ENCODE measurements at regions of chr16 and their contacts with region 1.

Region 1: DNA sequence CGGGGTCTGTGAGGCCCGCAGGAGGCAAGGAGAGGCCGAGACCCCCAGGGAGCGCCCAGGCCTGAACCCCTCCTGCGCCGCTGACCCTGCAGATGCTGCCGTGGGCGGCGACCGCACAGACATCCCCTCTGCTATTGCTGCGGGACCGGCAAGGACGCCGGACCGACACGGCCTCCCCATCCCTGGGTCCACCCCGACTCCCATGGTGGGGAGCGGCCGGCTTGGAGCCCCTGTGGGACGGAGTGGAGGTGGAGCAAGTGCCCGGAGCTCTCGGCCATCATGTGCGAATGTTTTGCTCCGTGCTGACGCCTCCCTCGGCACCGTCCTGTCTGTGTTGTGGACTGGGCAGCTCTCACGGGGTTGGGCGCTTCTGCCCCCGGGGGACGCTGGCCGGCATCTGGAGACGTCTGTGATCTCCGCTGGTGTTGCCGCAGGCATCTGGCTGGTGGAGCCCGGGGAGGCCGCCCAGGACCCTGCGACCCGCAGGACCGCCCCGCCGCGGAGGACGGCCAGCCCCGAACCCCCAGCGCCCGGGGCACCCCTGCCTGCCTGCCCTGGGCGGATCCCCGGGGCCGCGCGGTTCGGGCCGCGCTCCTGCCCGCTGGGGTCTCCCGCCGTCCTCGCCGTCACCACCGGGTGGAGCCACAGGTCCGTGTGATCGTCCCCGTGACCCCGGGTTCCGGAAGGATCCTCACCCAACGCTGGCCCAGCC is 12.8 kb upstream of the GNG13 start:
- DNase-seq: no peak
- H3K4me3 ChIP-seq: peak overlapping the region in 1 of 8 donors; percentile 36
- H3K27ac ChIP-seq: no peak overlapping the region
- H3K4me1 ChIP-seq: peaks cover 3 to 23% (median 15%) of the 10 kb centered on the region in 6 donors
- H3K27me3 ChIP-seq: peaks cover 0 to 86% (median 40%) of the 10 kb centered on the region in 7 donors
- CTCF ChIP-seq: peak in 9 of 11 experiments; percentile 41 to 80 (median 68)
- POLR2A ChIP-seq: no peak

Region 2: DNA sequence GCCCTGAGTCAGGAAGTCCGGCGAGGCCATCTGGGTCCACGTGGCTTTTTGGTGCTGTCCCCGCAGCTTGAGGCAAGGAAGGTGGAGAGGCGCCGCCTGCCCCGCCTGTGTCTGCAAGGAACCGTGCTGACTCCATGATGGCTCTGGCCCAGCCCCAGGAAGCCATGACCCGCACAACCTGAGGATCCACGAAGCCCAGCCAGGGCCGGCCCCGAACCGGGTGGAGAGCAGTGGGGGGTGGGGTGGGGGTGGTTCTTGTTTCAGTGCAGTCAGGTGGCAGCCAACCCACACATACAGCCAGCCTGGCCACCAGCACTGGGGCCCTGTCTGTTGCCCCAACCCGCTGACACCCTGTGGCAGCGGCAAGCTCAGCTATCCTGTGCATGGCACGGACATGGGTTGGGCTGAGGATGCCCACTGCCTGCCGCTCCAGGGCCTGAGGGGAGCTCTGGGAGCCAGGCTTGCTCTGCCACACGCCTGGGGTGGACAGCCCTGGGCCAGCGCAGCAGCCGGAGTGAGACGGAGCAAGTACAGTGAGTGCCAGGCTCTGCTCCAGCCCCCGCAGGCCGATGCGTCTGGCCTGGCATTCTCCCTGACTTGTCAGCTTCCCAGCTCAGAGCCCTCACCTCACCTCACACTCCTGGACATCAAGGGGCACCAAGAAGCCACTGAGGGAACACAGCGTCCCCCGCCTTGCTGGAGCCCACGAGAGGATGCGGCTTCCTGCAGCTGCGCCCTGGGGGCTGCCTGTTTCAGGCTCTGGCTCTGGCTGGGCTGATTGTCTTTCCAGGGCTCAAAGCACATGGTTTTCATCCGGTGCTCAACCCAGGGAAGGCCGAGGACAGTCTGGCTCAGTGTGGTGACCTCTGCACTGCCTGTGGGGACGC is 88.6 kb after region 1 on chr16:
- intact Hi-C with region 1: no loop called
- DNase-seq: no peak
- H3K4me3 ChIP-seq: no peak overlapping the region
- H3K27ac ChIP-seq: no peak overlapping the region
- H3K4me1 ChIP-seq: no peaks in the 10 kb centered on the region
- H3K27me3 ChIP-seq: no peaks in the 10 kb centered on the region
- CTCF ChIP-seq: no peak
- POLR2A ChIP-seq: no peak

Region 3: GRCh38 chr16:970766-971581 is 157.6 kb after region 1 on chr16 and contains the start of gene LMF1:
- intact Hi-C with region 1: loop called (anchors 10 kb)
- DNase-seq: peak; percentile 99
- H3K4me3 ChIP-seq: peak within 1 kb of the TSS; percentile 56 to 97 (median 89)
- H3K27ac ChIP-seq: peak within 1 kb of the TSS; percentile 73 to 91 (median 84)
- H3K4me1 ChIP-seq: peaks cover 10 to 71% (median 53%) of the 10 kb centered on the region in 6 donors
- H3K27me3 ChIP-seq: peaks cover 0 to under 1% (median 0%) of the 10 kb centered on the region in 7 donors
- CTCF ChIP-seq: peak in 1 of 11 experiments; percentile 25
- POLR2A ChIP-seq: peak in 2 of 3 donors; percentile 39 to 44
- total RNA-seq, gene LMF1: 22.5 to 57.6 (median 39.9) TPM

Region 4: DNA sequence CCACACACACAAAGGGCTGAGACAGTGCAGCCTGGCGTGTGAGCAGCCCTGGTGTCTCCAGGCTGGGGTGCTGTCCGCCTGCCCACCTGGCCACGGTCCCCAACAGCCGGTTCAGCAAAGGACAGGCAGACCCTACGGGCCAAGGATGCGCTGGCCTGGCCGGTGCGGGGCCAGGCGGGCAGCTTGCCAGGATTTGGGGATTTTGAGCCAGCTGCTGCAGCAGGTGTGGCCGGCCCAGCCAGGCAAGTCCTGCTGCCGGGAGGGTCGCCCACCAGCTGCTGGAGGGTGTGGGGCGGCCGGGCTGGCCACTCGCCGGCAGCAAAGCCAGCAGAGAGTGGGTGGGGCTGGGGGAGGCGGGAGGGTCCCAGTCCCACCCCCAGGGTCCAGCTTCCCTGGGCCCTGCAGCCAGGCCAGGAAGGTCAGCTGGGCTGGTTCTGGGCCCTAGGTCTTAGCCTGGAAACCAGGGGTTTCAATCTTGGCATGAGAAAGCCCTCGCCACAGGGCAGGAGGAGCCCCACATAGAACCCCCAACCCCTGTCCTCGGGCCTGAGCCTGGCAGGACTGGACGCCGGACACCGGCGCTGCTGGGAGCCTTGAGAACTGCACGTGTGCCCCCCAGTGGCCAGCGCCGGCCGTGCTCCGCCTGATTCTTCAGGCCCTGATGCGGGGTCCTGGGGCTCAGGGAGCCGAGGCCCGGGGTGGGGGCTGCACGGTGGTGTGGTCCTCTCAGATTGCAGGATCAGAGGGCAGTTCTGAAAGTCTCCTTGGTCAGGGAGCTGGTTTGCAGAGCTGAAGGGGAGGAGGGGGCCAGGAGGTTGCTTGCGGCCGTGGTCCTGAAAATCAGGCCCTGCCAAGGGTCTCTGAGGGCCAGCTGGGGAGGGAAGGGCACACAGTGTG is 241.5 kb after region 1 on chr16:
- intact Hi-C with region 1: loop called (anchors 5 kb)
- DNase-seq: no peak
- H3K4me3 ChIP-seq: no peak overlapping the region
- H3K27ac ChIP-seq: no peak overlapping the region
- H3K4me1 ChIP-seq: peaks cover 0 to 9% (median 0%) of the 10 kb centered on the region in 6 donors
- H3K27me3 ChIP-seq: peaks cover 0 to 70% (median 28%) of the 10 kb centered on the region in 7 donors
- CTCF ChIP-seq: peak; percentile 14 to 80 (median 69)
- POLR2A ChIP-seq: no peak

Region 5: GRCh38 chr16:1208239-1208830 is 395.0 kb after region 1 on chr16:
- intact Hi-C with region 1: no loop called
- DNase-seq: no peak
- H3K4me3 ChIP-seq: no peak overlapping the region
- H3K27ac ChIP-seq: peak overlapping the region in 1 of 8 donors; percentile 42
- H3K4me1 ChIP-seq: no peaks in the 10 kb centered on the region
- H3K27me3 ChIP-seq: peaks cover 0 to 41% (median 0%) of the 10 kb centered on the region in 7 donors
- CTCF ChIP-seq: no peak
- POLR2A ChIP-seq: no peak